AG04449 (cell line): ENCODE measurements at regions of chr16 and their contacts with region 1.

Region 1: GRCh38 chr16:29256501-29256981 is 150.0 kb downstream of the NPIPB11 start:
- DNase-seq: no peak
- H3K4me3 ChIP-seq: no peak overlapping the region
- CTCF ChIP-seq: no peak

Region 2: GRCh38 chr16:29114569-29114968 is 142.0 kb before region 1 on chr16:
- CTCF ChIA-PET with region 1: interaction called, 46 read pairs
- POLR2A ChIA-PET with region 1: no interaction called
- DNase-seq: no peak
- H3K4me3 ChIP-seq: no peak overlapping the region
- CTCF ChIP-seq: no peak